CD4-positive, alpha-beta T cell (primary cell): ENCODE measurements at regions of chrX and their contacts with region 1.

Region 1: DNA sequence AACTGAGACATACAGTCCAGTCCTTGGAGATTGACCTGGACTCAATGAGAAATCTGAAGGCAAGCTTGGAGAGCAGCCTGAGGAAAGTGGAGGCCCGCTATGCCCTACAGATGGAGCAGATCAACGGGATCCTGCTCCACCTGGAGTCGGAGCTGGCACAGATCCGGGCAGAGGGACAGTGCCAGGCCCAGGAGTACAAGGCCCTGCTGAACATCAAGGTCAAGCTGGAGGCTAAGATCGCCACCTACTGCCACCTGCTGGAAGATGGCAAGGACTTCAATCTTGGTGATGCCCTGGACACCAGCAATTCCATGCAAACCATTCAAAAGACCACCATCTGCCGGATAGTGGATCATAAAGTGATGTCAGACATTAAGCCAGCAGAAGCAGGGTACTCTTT is 20.4 kb upstream of the FRMPD3 start:
- DNase-seq: peak in 8 of 14 experiments; percentile 2 to 55 (median 31)
- ATAC-seq: no peak
- H3K4me3 ChIP-seq: no peak overlapping the region
- H3K4me3 Mint-ChIP-seq: no peak overlapping the region
- H3K27ac ChIP-seq: no peak overlapping the region
- H3K27ac Mint-ChIP-seq: no peak overlapping the region
- H3K4me1 ChIP-seq: no peaks in the 10 kb centered on the region
- H3K4me1 Mint-ChIP-seq: no peaks in the 10 kb centered on the region
- H3K27me3 ChIP-seq: no peaks in the 10 kb centered on the region
- H3K27me3 Mint-ChIP-seq: no peaks in the 10 kb centered on the region
- CTCF ChIP-seq: peak; percentile 20

Region 2: DNA sequence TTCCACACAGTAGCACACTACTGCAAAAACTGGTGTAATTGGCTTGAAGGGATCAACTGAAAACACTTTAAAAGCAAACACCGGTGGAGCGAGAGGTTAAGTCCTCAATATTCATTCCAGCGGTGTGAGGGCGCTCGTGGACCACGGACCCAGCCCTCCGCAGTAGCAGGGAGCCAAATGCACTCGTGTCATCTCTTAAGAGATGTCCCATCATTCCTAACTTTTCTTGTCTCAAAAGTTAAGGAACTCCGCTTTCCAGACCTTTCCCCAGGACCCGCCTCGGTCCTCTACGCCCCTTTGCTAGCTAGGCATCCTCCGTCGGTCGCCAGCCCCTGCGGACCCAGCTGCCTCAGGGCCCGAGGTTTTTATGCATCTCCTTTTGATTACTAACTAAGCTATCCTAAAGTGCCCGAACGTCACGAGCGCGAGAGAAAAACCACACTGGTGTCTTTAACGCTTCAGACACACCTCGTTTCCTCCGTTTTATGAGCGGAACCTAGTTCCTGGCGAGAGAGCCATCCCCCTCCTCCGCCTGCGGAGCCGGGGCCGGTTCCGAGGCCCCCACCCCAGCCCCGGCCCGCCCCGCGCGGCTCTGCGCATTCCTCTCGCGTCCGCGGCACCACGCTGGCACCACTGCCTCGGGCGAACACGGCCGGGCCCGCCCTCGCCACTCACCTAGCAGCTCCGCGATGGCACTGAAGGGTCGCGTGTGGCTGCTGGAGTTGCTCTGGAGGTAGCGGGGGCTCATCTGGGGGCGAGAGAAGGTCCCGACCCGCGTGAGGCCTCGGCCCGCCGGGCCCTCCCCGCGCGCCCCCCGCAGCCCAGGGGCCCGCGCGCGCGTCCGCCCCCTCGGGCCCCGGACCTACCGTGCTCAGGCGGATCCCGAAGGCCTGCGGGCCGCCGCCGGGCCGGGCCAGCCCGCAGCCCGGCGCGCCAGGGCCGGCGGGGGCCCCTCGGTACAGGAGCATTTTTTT is 429.8 kb before region 1 on chrX:
- CTCF ChIA-PET with region 1: no interaction called
- POLR2A ChIA-PET with region 1: no interaction called
- intact Hi-C with region 1: loop called in 1 of 2 experiments (anchors 1 kb)
- DNase-seq: peak; percentile 5 to 69 (median 36)
- ATAC-seq: peak; percentile 74
- H3K4me3 ChIP-seq: peak overlapping the region; percentile 62
- H3K4me3 Mint-ChIP-seq: peak overlapping the region; percentile 88
- H3K27ac ChIP-seq: no peak overlapping the region
- H3K27ac Mint-ChIP-seq: peak overlapping the region; percentile 73
- H3K4me1 ChIP-seq: peaks cover 8% of the 10 kb centered on the region
- H3K4me1 Mint-ChIP-seq: peaks cover 13% of the 10 kb centered on the region
- H3K27me3 ChIP-seq: no peaks in the 10 kb centered on the region
- H3K27me3 Mint-ChIP-seq: no peaks in the 10 kb centered on the region
- CTCF ChIP-seq: peak; percentile 49

Region 3: GRCh38 chrX:107298266-107298665 is 130.8 kb before region 1 on chrX:
- CTCF ChIA-PET with region 1: no interaction called
- POLR2A ChIA-PET with region 1: no interaction called
- intact Hi-C with region 1: no loop called
- DNase-seq: no peak
- ATAC-seq: no peak
- H3K4me3 ChIP-seq: no peak overlapping the region
- H3K4me3 Mint-ChIP-seq: no peak overlapping the region
- H3K27ac ChIP-seq: no peak overlapping the region
- H3K27ac Mint-ChIP-seq: no peak overlapping the region
- H3K4me1 ChIP-seq: no peaks in the 10 kb centered on the region
- H3K4me1 Mint-ChIP-seq: no peaks in the 10 kb centered on the region
- H3K27me3 ChIP-seq: peaks cover 3 to 4% of the 10 kb centered on the region in 2 experiments
- H3K27me3 Mint-ChIP-seq: peaks cover 9% of the 10 kb centered on the region
- CTCF ChIP-seq: no peak